ENCODE measurements at regions of chr9 and their contacts with region 1.

Region 1: DNA sequence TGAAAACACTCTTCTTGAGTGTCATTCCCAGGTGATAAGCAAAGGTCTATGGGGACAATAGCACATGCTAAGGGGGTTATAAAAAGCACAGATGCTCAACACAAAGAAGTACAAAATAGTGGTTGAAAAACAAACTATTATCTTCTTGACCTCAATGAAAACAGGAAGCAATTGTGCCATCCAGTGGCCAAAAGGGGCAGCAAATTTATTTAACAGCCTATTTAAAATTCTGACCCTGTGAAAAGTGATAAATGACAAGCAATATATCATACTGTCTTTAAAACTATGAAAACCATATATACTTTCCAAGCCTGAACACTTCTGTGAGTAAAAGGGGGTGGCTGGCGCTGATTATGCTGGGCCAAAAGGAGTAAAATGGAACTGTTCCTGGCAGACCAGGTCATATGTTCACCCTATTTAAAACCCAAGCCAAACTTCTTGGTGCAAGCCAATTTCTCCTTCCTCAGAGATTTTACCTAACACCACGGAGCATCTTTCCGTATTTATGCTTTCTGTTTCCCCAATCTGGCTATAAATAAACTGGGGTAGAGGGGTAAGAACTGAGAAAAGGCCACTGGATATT is 29.7 kb downstream of the TEX10 start:
- DNase-seq: peak in 1 of 2 donors; percentile 50
- ATAC-seq: peak; percentile 29 to 50 (median 46)
- H3K4me3 ChIP-seq: no peak overlapping the region
- H3K4me3 Mint-ChIP-seq: no peak overlapping the region
- H3K27ac ChIP-seq: no peak overlapping the region
- H3K27ac Mint-ChIP-seq: peak overlapping the region in 1 of 2 donors; percentile 2
- H3K4me1 ChIP-seq: no peaks in the 10 kb centered on the region
- H3K4me1 Mint-ChIP-seq: peaks cover 0 to 13% of the 10 kb centered on the region in 2 donors
- H3K27me3 ChIP-seq: no peaks in the 10 kb centered on the region
- H3K27me3 Mint-ChIP-seq: no peaks in the 10 kb centered on the region
- CTCF ChIP-seq: peak; percentile 67

Region 2: GRCh38 chr9:99184475-99185347 is 1138.3 kb before region 1 on chr9:
- intact Hi-C with region 1: loop called (anchors 1 kb)
- DNase-seq: peak; percentile 70 to 91
- ATAC-seq: peak; percentile 87 to 92 (median 90)
- H3K4me3 ChIP-seq: no peak overlapping the region
- H3K4me3 Mint-ChIP-seq: peak overlapping the region; percentile 57
- H3K27ac ChIP-seq: peak overlapping the region; percentile 27
- H3K27ac Mint-ChIP-seq: peak overlapping the region; percentile 34 to 72
- H3K4me1 ChIP-seq: peaks cover 27% of the 10 kb centered on the region
- H3K4me1 Mint-ChIP-seq: peaks cover 17 to 22% of the 10 kb centered on the region in 2 donors
- H3K27me3 ChIP-seq: no peaks in the 10 kb centered on the region
- H3K27me3 Mint-ChIP-seq: peaks cover 12 to 15% of the 10 kb centered on the region in 2 donors
- CTCF ChIP-seq: peak; percentile 88

Region 3: GRCh38 chr9:99266255-99267023 is 1056.6 kb before region 1 on chr9:
- intact Hi-C with region 1: loop called (anchors 5 kb)
- DNase-seq: peak; percentile 58 to 72
- ATAC-seq: peak; percentile 73 to 91 (median 86)
- H3K4me3 ChIP-seq: no peak overlapping the region
- H3K4me3 Mint-ChIP-seq: no peak overlapping the region
- H3K27ac ChIP-seq: no peak overlapping the region
- H3K27ac Mint-ChIP-seq: peak overlapping the region in 1 of 2 donors; percentile 2
- H3K4me1 ChIP-seq: peaks cover 7% of the 10 kb centered on the region
- H3K4me1 Mint-ChIP-seq: peaks cover 11% of the 10 kb centered on the region in 2 donors
- H3K27me3 ChIP-seq: no peaks in the 10 kb centered on the region
- H3K27me3 Mint-ChIP-seq: peaks cover 6 to 15% of the 10 kb centered on the region in 2 donors
- CTCF ChIP-seq: peak; percentile 91

Region 4: GRCh38 chr9:99579964-99580363 is 743.1 kb before region 1 on chr9:
- intact Hi-C with region 1: no loop called
- DNase-seq: no peak
- ATAC-seq: no peak
- H3K4me3 ChIP-seq: no peak overlapping the region
- H3K4me3 Mint-ChIP-seq: no peak overlapping the region
- H3K27ac ChIP-seq: no peak overlapping the region
- H3K27ac Mint-ChIP-seq: no peak overlapping the region
- H3K4me1 ChIP-seq: no peaks in the 10 kb centered on the region
- H3K4me1 Mint-ChIP-seq: no peaks in the 10 kb centered on the region
- H3K27me3 ChIP-seq: no peaks in the 10 kb centered on the region
- H3K27me3 Mint-ChIP-seq: peaks cover 9 to 12% of the 10 kb centered on the region in 2 donors
- CTCF ChIP-seq: no peak

Region 5: DNA sequence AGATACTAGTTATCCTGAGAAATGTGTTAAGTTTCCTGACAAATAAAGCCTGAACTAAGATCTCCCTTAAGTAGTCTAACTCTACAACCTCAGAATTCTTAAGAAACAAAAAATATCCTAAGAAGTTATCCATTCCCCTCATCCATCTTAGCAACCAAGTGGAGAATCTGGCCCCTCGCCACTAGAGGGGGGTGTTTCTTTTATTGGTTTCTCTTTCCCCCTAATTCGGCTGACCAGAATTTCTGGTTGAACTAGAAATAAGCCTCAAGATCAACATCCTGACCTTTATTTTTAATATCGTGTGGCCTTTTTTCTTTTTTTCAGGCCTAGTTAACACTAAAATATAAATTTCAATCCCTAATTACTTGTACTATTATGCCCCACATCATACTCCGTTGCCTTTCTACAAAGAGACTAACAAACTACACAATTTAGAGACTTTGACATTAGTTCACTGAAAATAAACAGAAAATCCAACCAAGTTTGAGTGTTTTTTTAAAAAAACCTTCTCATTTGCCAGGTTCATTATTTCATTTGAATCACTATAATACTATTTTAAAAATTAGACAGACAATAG is 515.7 kb before region 1 on chr9:
- intact Hi-C with region 1: loop called (anchors 10 kb)
- DNase-seq: peak; percentile 49 to 87
- ATAC-seq: peak; percentile 85 to 93 (median 91)
- H3K4me3 ChIP-seq: no peak overlapping the region
- H3K4me3 Mint-ChIP-seq: no peak overlapping the region
- H3K27ac ChIP-seq: no peak overlapping the region
- H3K27ac Mint-ChIP-seq: peak overlapping the region; percentile 2 to 13
- H3K4me1 ChIP-seq: no peaks in the 10 kb centered on the region
- H3K4me1 Mint-ChIP-seq: peaks cover 10% of the 10 kb centered on the region in 2 donors
- H3K27me3 ChIP-seq: no peaks in the 10 kb centered on the region
- H3K27me3 Mint-ChIP-seq: no peaks in the 10 kb centered on the region
- CTCF ChIP-seq: peak; percentile 88

Region 6: GRCh38 chr9:100028201-100028784 is 294.8 kb before region 1 on chr9:
- intact Hi-C with region 1: loop called (anchors 1 kb)
- DNase-seq: peak; percentile 56 to 78
- ATAC-seq: peak; percentile 94 to 100 (median 100)
- H3K4me3 ChIP-seq: no peak overlapping the region
- H3K4me3 Mint-ChIP-seq: no peak overlapping the region
- H3K27ac ChIP-seq: no peak overlapping the region
- H3K27ac Mint-ChIP-seq: peak overlapping the region in 1 of 2 donors; percentile 37
- H3K4me1 ChIP-seq: no peaks in the 10 kb centered on the region
- H3K4me1 Mint-ChIP-seq: peaks cover 18 to 30% of the 10 kb centered on the region in 2 donors
- H3K27me3 ChIP-seq: no peaks in the 10 kb centered on the region
- H3K27me3 Mint-ChIP-seq: no peaks in the 10 kb centered on the region
- CTCF ChIP-seq: peak; percentile 93

Region 7: GRCh38 chr9:100359057-100359456 is 36.0 kb after region 1 on chr9:
- intact Hi-C with region 1: no loop called
- DNase-seq: no peak
- ATAC-seq: no peak
- H3K4me3 ChIP-seq: no peak overlapping the region
- H3K4me3 Mint-ChIP-seq: no peak overlapping the region
- H3K27ac ChIP-seq: no peak overlapping the region
- H3K27ac Mint-ChIP-seq: no peak overlapping the region
- H3K4me1 ChIP-seq: no peaks in the 10 kb centered on the region
- H3K4me1 Mint-ChIP-seq: peaks cover 4 to 13% of the 10 kb centered on the region in 2 donors
- H3K27me3 ChIP-seq: no peaks in the 10 kb centered on the region
- H3K27me3 Mint-ChIP-seq: no peaks in the 10 kb centered on the region
- CTCF ChIP-seq: no peak

Region 8: GRCh38 chr9:100598641-100599145 is 275.6 kb after region 1 on chr9:
- intact Hi-C with region 1: loop called (anchors 5 kb)
- DNase-seq: peak; percentile 67 to 91
- ATAC-seq: peak; percentile 83 to 92 (median 88)
- H3K4me3 ChIP-seq: peak overlapping the region; percentile 46
- H3K4me3 Mint-ChIP-seq: peak overlapping the region; percentile 89
- H3K27ac ChIP-seq: peak overlapping the region; percentile 6
- H3K27ac Mint-ChIP-seq: peak overlapping the region; percentile 1 to 19
- H3K4me1 ChIP-seq: peaks cover 7% of the 10 kb centered on the region
- H3K4me1 Mint-ChIP-seq: peaks cover 23 to 25% of the 10 kb centered on the region in 2 donors
- H3K27me3 ChIP-seq: peaks cover 2% of the 10 kb centered on the region
- H3K27me3 Mint-ChIP-seq: peaks cover 0 to 2% of the 10 kb centered on the region in 2 donors
- CTCF ChIP-seq: no peak